CD8-positive, alpha-beta T cell (primary cell): ENCODE measurements at regions of chr5 and their contacts with region 1.

Region 1: DNA sequence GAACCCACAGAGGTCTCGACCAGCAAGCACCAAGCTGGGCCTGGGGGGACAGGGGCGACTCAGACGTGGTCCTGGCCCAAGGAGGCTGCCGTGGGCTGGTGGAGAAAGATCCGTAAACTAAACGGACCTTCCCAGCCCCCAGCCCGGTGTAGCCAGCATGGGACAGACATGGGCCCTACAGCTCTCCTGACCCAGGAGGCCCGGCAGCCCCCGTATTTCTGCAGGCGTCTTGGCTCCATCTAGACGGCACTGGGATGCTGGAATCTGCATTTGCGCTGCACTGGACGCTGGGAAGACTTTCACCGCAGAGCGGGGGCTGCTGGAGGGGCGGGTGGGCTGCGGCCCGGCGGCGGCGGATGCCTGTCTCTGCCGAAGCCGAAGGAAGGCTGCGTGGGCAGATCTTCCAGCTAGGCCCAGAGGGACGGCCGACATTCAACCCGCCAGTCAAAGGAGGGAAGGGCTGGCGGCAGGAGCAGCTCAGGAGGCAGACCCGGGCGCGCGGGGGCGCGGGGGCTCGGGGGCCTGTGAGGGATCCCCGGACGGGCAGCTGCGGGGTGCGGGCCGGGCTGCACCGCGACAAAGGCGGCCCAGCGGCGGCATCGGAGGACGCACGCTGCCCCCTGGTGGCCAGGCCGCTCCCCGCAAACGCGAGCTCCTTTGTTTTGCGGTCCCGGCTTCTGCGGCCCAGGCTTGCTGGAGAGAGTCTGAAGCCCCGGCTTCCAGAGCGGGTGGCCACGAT is 266.2 kb downstream of the NSG2 start:
- DNase-seq: peak; percentile 13 to 61 (median 44)
- ATAC-seq: peak; percentile 56
- H3K4me3 ChIP-seq: no peak overlapping the region
- H3K4me3 Mint-ChIP-seq: no peak overlapping the region
- H3K27ac ChIP-seq: no peak overlapping the region
- H3K27ac Mint-ChIP-seq: no peak overlapping the region
- H3K4me1 ChIP-seq: no peaks in the 10 kb centered on the region
- H3K4me1 Mint-ChIP-seq: peaks cover 5% of the 10 kb centered on the region
- H3K27me3 ChIP-seq: peaks cover 0 to 4% of the 10 kb centered on the region in 2 experiments
- H3K27me3 Mint-ChIP-seq: peaks cover 42% of the 10 kb centered on the region
- CTCF ChIP-seq: peak; percentile 54

Region 2: DNA sequence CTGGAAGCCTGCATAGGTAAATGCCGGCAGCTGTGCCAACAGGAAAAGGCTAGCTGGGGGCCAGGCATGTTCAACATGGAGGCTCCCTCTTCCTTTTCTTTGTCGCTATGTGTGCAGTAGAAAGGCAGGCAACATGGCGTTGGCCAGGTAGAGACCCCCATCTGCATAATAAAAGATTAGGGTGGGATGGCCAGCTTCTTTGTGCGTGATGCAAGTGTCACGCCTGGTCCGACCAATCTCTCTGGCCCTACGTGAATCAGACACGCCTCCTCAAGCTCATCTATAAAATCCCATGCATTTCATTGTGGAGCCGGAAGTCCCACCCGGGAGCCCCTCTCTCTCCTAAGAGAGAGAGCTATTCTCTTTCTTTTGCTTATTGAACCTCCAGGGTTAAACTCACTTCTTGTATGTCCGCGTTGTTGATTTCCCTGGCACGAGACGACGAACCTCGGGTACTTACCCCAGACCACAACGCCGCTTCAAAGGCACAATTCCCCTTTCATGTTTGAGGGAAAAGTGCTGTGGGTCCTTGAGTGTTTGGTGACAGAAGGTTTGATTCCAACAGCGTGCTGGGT is 347.7 kb before region 1 on chr5:
- CTCF ChIA-PET with region 1: no interaction called
- POLR2A ChIA-PET with region 1: no interaction called
- intact Hi-C with region 1: loop called in 1 of 2 experiments (anchors 10 kb)
- DNase-seq: peak in 4 of 9 experiments; percentile 35 to 74 (median 62)
- ATAC-seq: peak; percentile 81
- H3K4me3 ChIP-seq: no peak overlapping the region
- H3K4me3 Mint-ChIP-seq: peak overlapping the region; percentile 58
- H3K27ac ChIP-seq: peak overlapping the region in 1 of 2 experiments; percentile 26
- H3K27ac Mint-ChIP-seq: peak overlapping the region; percentile 57
- H3K4me1 ChIP-seq: peaks cover 16% of the 10 kb centered on the region
- H3K4me1 Mint-ChIP-seq: peaks cover 30% of the 10 kb centered on the region
- H3K27me3 ChIP-seq: no peaks in the 10 kb centered on the region
- H3K27me3 Mint-ChIP-seq: no peaks in the 10 kb centered on the region
- CTCF ChIP-seq: no peak